ENCODE measurements at regions of chr3 and their contacts with region 1.

Region 1: DNA sequence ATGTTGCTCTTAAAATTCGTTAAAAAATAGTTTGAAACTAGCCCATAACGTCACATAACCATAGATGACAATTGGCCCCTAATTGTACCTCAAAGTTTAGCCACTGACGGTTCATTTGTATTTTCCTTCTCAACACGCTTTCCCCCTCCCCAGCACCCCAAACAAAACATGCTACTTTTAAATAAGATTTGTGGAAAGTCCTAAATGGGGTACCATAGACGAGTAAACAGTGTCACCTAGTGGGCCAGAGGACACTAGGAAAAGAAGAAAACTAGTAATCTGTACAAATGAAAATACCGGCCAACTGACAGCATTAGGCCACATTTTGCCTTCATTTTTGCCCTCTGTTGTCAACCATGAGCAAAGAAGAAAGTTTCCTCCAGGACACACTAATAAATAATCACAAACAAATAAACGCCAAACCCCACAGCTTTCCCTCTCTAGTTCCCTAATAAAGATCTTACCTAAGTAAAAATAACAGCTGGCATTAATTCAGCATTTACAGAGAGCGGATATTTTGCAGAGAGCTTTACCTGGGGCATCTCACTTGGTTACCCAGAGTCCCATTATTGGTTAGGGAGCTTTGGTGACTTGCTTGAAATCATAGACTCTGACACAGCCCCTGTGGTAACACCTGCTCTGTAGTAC is 175.1 kb upstream of the ATP11B start:
- DNase-seq: peak; percentile 78
- ATAC-seq: peak; percentile 77
- H3K4me3 ChIP-seq: no peak overlapping the region
- H3K27ac ChIP-seq: peak overlapping the region; percentile 47
- H3K4me1 ChIP-seq: peaks cover 27% of the 10 kb centered on the region
- H3K27me3 ChIP-seq: no peaks in the 10 kb centered on the region
- CTCF ChIP-seq: peak; percentile 95

Region 2: GRCh38 chr3:180802837-180803236 is 1815.4 kb before region 1 on chr3:
- CTCF ChIA-PET with region 1: no interaction called
- POLR2A ChIA-PET with region 1: no interaction called
- intact Hi-C with region 1: loop called (anchors 2 kb)
- DNase-seq: peak; percentile 52
- ATAC-seq: peak; percentile 72
- H3K4me3 ChIP-seq: no peak overlapping the region
- H3K27ac ChIP-seq: no peak overlapping the region
- H3K4me1 ChIP-seq: no peaks in the 10 kb centered on the region
- H3K27me3 ChIP-seq: peaks cover 21% of the 10 kb centered on the region
- CTCF ChIP-seq: peak; percentile 60

Region 3: GRCh38 chr3:181700168-181701087 is 917.8 kb before region 1 on chr3:
- CTCF ChIA-PET with region 1: interaction called, 10 read pairs
- POLR2A ChIA-PET with region 1: no interaction called
- intact Hi-C with region 1: no loop called
- DNase-seq: peak; percentile 76
- ATAC-seq: peak; percentile 87
- H3K4me3 ChIP-seq: peak overlapping the region; percentile 41; the same call in 1 of the 2 replicates
- H3K27ac ChIP-seq: no peak overlapping the region
- H3K4me1 ChIP-seq: no peaks in the 10 kb centered on the region; the same call in 1 of the 2 replicates
- H3K27me3 ChIP-seq: peaks cover 73% of the 10 kb centered on the region
- CTCF ChIP-seq: peak; percentile 93

Region 4: GRCh38 chr3:181823716-181824115 is 794.5 kb before region 1 on chr3:
- CTCF ChIA-PET with region 1: interaction called, 11 read pairs
- POLR2A ChIA-PET with region 1: no interaction called
- intact Hi-C with region 1: no loop called
- DNase-seq: no peak
- ATAC-seq: no peak
- H3K4me3 ChIP-seq: no peak overlapping the region
- H3K27ac ChIP-seq: no peak overlapping the region
- H3K4me1 ChIP-seq: no peaks in the 10 kb centered on the region
- H3K27me3 ChIP-seq: peaks cover 37% of the 10 kb centered on the region
- CTCF ChIP-seq: no peak

Region 5: DNA sequence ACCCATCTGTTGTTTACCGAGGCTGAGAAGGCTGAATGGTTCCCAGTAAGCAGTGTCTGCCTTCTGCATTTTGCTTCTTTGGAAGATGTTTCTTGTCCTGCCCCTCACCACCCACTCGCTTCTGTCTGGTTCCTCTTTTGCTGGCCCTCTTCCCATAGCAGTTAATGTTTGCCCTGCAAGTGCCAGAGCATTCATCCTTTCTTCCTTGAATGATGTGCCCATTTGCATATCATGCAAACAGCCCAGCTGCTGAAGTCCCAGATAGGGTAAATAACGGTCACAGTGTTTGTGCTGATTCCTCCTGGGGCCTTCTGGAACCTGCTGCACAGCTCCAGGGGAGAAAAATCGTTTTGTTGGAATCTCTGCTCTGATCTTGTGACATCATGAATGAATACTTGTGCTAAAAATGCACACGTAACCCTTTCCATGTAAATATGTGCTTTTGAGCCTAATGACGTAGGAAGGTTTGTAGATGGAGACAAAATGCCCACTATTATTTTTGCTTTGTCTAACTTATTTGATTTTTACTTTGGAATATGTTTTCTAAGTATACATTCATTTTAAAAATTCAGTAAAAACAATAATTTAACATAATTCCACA is 525.4 kb before region 1 on chr3:
- CTCF ChIA-PET with region 1: no interaction called
- POLR2A ChIA-PET with region 1: no interaction called
- intact Hi-C with region 1: no loop called
- DNase-seq: no peak
- ATAC-seq: no peak
- H3K4me3 ChIP-seq: no peak overlapping the region
- H3K27ac ChIP-seq: no peak overlapping the region
- H3K4me1 ChIP-seq: no peaks in the 10 kb centered on the region
- H3K27me3 ChIP-seq: peaks cover 30% of the 10 kb centered on the region
- CTCF ChIP-seq: no peak

Region 6: GRCh38 chr3:182248351-182248880 is 369.8 kb before region 1 on chr3:
- CTCF ChIA-PET with region 1: interaction called, 7 read pairs
- POLR2A ChIA-PET with region 1: no interaction called
- intact Hi-C with region 1: loop called (anchors 1 kb)
- DNase-seq: peak; percentile 56
- ATAC-seq: peak; percentile 79
- H3K4me3 ChIP-seq: no peak overlapping the region
- H3K27ac ChIP-seq: no peak overlapping the region
- H3K4me1 ChIP-seq: no peaks in the 10 kb centered on the region
- H3K27me3 ChIP-seq: no peaks in the 10 kb centered on the region
- CTCF ChIP-seq: peak; percentile 54

Region 7: GRCh38 chr3:182325213-182325941 is 292.8 kb before region 1 on chr3:
- CTCF ChIA-PET with region 1: no interaction called
- POLR2A ChIA-PET with region 1: no interaction called
- intact Hi-C with region 1: loop called (anchors 10 kb)
- DNase-seq: peak; percentile 45
- ATAC-seq: no peak
- H3K4me3 ChIP-seq: no peak overlapping the region
- H3K27ac ChIP-seq: no peak overlapping the region
- H3K4me1 ChIP-seq: peaks cover 46% of the 10 kb centered on the region
- H3K27me3 ChIP-seq: no peaks in the 10 kb centered on the region
- CTCF ChIP-seq: no peak

Region 8: GRCh38 chr3:182683453-182683852 is 65.2 kb after region 1 on chr3:
- CTCF ChIA-PET with region 1: no interaction called
- POLR2A ChIA-PET with region 1: no interaction called
- intact Hi-C with region 1: loop called (anchors 1 kb)
- DNase-seq: peak; percentile 93
- ATAC-seq: peak; percentile 82
- H3K4me3 ChIP-seq: peak overlapping the region; percentile 80
- H3K27ac ChIP-seq: no peak overlapping the region
- H3K4me1 ChIP-seq: peaks cover 13% of the 10 kb centered on the region; the same call in 1 of the 2 replicates
- H3K27me3 ChIP-seq: peaks cover 35% of the 10 kb centered on the region
- CTCF ChIP-seq: peak; percentile 97

Measured in PC-3 (cell line).